Right ventricle myocardium superior (tissue), 1 donor: ENCODE measurements at regions of chr15 and their contacts with region 1.

Region 1: GRCh38 chr15:40274350-40275274 is 8.3 kb downstream of the ANKRD63 start:
- DNase-seq: peak; percentile 86
- ATAC-seq: peak; percentile 70

Region 2: GRCh38 chr15:40044717-40045571 is 229.7 kb before region 1 on chr15:
- intact Hi-C with region 1: loop called (anchors 5 kb)
- DNase-seq: peak; percentile 94
- ATAC-seq: peak; percentile 93

Region 3: GRCh38 chr15:40098489-40099261 is 175.9 kb before region 1 on chr15:
- intact Hi-C with region 1: no loop called
- DNase-seq: peak; percentile 69
- ATAC-seq: peak; percentile 76

Region 4: GRCh38 chr15:40219801-40220200 is 54.8 kb before region 1 on chr15:
- intact Hi-C with region 1: loop called (anchors 2 kb)
- DNase-seq: no peak
- ATAC-seq: no peak

Region 5: GRCh38 chr15:40310001-40310959 is 35.7 kb after region 1 on chr15:
- intact Hi-C with region 1: loop called (anchors 1 kb)
- DNase-seq: peak; percentile 72
- ATAC-seq: peak; percentile 77